ENCODE measurements at regions of chr1 and their contacts with region 1.

Region 1: GRCh38 chr1:179365320-179366092 is at the start of gene AXDND1:
- DNase-seq: peak; percentile 68
- H3K27ac ChIP-seq: peak within 1 kb of the TSS; percentile 88
- CTCF ChIP-seq: no peak

Region 2: DNA sequence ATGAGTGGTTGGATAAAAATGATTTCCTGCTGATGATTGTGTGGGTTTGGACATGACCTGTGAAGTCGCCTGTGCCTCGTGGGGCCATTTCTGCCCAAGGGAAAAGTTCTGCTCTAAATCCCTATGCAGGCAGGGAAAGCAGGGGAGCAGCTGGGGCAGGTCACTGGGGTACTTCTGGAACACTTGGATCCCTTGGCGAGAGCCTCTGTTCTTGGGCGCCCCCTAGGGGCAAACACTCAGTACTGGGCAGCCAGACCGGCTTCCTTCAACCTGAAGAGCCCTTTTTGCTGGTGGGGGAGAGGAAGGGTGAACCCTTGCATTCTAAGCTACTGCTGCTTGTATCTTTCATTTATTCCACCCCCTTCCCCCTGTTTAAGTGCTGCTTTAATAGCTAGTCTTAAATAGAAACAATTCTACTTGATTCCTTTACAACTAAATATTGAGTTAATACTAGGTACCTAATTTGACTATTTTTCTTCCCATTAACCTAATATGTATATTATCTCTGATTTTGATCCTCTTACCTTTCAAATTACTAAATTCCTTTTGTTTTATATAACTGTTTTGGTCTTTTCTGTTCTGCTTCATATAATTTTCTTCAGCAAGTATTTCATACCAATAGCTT is 863.7 kb before region 1 on chr1:
- CTCF ChIA-PET with region 1: interaction called, 10 read pairs
- POLR2A ChIA-PET with region 1: no interaction called
- DNase-seq: peak; percentile 65
- H3K27ac ChIP-seq: no peak overlapping the region
- CTCF ChIP-seq: peak; percentile 75

Region 3: GRCh38 chr1:179380299-179380698 is 14.8 kb after region 1 on chr1:
- CTCF ChIA-PET with region 1: no interaction called
- POLR2A ChIA-PET with region 1: interaction called, 12 read pairs
- DNase-seq: no peak
- H3K27ac ChIP-seq: no peak overlapping the region
- CTCF ChIP-seq: no peak